BJ (cell line): ENCODE measurements at regions of chr1 and their contacts with region 1.

Region 1: DNA sequence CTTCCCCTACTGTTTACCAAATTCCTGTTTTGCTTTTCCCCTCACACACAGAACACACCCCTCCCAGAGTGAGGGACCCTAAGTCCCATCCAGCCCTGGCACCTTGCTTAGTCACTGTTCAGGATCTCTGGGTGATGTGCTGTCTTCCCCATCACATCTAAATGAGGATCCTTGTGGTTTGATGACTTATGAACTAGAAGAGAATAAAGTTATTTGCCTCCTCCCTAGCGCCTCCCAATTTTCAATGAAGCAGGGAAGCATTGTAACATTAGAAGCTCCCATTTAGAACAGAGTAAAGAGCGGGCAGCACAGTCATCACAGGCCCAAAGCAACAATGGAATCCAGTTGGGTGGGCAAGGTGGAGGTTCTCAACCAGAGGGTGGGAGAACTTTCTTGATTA is 27.0 kb downstream of the DISC1 start:
- DNase-seq: no peak
- H3K4me3 ChIP-seq: no peak overlapping the region
- H3K27me3 ChIP-seq: no peaks in the 10 kb centered on the region
- CTCF ChIP-seq: no peak

Region 2: DNA sequence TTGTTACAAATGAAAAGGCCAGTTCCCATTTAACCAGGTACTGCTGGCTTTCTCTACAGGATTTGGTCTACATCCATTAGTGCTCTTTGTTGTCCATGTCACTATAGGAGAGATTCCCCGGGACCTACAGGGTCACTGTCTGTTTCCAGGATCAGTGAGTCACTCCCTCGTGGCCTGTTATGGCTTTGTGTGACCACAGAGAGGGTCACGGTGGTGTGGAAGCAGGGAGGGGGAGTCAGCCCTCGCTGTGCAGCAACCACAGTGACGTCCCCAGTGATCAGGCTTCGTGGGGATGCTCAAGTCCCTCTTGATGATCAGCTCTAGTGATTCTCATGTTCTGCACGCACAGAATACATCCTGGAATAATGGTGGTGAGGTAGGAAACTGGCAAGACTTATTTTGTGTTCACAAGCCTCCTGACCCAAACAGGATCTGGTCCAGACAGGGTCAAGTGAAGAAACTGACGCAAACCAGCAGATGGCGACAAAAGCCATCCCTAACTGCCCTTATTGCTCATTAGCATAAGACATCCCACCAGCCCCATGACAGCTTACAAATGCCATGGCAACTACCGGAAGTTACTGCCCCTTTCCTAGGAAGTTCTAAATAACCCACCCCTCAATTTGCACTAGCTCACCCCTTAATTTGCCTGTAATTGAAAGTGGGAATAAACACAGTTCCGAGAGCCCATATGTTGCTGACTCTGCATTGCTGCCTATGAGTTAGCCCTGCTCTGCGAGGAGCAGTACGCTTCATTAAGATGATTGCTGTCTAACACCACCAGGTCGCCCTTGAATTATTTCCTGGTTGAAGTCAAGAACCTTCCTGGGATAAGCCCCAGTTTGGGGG is 71.5 kb after region 1 on chr1:
- CTCF ChIA-PET with region 1: no interaction called
- POLR2A ChIA-PET with region 1: no interaction called
- DNase-seq: no peak
- H3K4me3 ChIP-seq: no peak overlapping the region
- H3K27me3 ChIP-seq: no peaks in the 10 kb centered on the region
- CTCF ChIP-seq: peak; percentile 46

Region 3: DNA sequence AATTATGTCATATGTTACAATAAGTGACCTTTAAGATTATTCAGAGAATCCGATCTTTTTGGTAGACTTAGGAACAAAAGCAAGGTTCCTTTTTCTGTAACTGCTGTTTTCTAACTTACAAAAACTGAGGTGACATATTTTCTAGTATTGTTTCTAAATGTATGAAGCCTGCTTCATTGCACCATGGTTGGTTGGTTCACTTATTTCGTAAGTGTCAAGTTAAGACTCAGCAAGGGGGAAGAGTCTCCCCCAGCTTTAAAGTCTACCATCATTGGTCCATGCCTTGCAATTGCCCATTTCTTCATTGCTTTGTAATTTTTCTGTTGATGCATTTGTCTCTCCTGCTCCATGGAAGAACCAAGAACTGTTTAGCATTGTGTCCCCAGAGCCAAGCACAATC is 109.8 kb after region 1 on chr1:
- CTCF ChIA-PET with region 1: no interaction called
- POLR2A ChIA-PET with region 1: interaction called, 14 read pairs
- DNase-seq: no peak
- H3K4me3 ChIP-seq: no peak overlapping the region
- H3K27me3 ChIP-seq: no peaks in the 10 kb centered on the region
- CTCF ChIP-seq: no peak